Ascending aorta (tissue), 2 donors: ENCODE measurements at regions of chr5 and their contacts with region 1.

Region 1: DNA sequence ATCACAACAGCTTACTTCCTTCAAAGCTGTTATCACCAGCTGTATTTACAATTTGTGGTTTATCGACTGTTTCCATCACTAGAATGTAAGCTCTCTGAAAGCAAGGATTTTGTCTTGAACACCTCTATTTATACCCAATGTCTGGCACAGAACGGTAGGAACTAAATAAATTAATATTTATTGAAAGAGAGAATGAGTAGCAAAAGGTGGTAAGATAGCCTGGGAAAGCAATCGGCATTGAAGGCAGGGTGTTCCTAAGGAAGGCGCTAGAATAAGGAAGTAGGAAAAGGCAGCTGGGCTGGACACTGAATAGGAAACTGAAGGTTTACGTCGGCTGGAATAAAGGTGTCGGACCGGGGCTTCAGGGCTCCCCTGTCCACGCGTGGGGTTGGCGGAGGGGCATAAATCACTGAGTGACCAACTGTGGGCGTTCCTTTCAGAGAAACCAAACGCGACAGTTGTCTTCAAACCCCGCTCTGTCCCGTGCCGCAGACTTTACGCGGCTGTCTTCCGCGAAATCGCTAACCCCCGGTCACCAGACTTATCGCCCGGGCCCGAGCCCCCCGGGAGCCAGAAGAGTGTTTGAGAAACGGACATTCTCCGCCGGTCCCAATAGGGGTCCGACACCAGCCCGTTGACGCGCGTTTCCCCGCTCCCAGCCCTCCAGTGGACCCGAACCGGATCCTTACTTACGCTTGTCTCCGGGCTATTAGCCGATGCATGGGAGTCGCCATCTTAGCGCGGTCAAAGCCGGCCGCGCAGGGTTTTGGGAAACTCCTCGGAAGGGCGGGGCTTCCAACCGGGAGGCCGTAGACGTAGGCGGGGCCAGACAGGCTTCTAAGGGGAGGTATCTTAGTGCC is at the start of gene ZCCHC10:
- DNase-seq: peak; percentile 75 to 97
- H3K4me3 ChIP-seq: peak within 1 kb of the TSS; percentile 86 to 87
- H3K27ac ChIP-seq: peak within 1 kb of the TSS; percentile 89 to 97
- H3K4me1 ChIP-seq: peaks cover 4 to 17% of the 10 kb centered on the region in 2 donors
- H3K27me3 ChIP-seq: no peaks in the 10 kb centered on the region
- CTCF ChIP-seq: no peak
- total RNA-seq, gene ZCCHC10: 1.9 TPM

Region 2: GRCh38 chr5:132655821-132656773 is 369.9 kb before region 1 on chr5:
- intact Hi-C with region 1: no loop called
- DNase-seq: peak in 1 of 2 donors; percentile 60
- H3K4me3 ChIP-seq: peak overlapping the region; percentile 59 to 72
- H3K27ac ChIP-seq: no peak overlapping the region
- H3K4me1 ChIP-seq: peaks cover 6 to 8% of the 10 kb centered on the region in 2 donors
- H3K27me3 ChIP-seq: no peaks in the 10 kb centered on the region
- CTCF ChIP-seq: peak in 2 of 3 experiments; percentile 43 to 45

Region 3: GRCh38 chr5:133041910-133042309 is 15.9 kb after region 1 on chr5:
- intact Hi-C with region 1: loop called (anchors 2 kb)
- DNase-seq: no peak
- H3K4me3 ChIP-seq: no peak overlapping the region
- H3K27ac ChIP-seq: peak overlapping the region; percentile 34 to 39
- H3K4me1 ChIP-seq: peaks cover 2 to 15% of the 10 kb centered on the region in 2 donors
- H3K27me3 ChIP-seq: no peaks in the 10 kb centered on the region
- CTCF ChIP-seq: peak in 1 of 3 experiments; percentile 16